ENCODE measurements at regions of chr2 and their contacts with region 1.

Region 1: DNA sequence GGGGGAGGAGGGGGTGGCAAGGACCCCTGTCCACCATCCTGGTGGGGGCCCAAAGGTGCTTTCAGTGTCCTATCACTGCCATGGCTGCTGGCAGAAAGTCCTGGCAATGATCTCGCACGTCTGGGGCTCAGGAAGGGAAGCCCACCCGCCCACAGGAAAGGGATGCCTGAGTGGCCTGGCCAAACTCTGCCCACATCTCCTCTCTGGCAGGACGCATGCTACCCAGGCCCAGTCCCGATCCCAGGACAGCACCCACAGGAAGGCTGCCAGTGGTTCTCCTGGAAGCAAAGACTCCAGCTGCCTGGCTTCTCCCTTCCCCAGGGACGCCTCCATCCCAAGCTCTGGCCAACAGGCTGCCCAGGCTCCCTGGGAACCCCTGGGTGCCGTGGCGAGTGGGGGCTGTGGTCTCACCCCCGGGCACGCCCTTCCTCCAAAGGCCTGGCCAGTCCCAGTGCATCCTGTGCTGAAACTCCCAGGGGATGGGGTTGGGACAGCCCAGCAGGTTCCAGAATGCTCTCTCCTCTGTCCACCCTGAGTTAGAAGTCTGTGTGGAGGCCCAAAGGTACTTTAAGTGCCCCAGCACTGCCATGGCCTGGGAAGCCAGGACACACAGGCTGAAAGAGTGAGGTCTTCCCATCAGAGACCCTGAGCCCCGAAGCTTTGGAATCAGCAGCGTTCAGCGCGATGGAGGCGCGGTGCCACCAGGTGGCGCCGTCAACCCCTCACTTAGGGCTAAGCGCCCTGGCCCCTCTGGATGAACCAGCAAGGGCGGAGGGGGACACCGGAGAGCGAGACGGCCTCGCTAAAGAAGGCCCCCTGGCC is 29.8 kb upstream of the TAF1B start:
- DNase-seq: peak; percentile 83
- ATAC-seq: peak; percentile 95
- H3K4me3 Mint-ChIP-seq: no peak overlapping the region
- H3K27ac Mint-ChIP-seq: peak overlapping the region; percentile 49
- H3K4me1 Mint-ChIP-seq: peaks cover 8% of the 10 kb centered on the region
- H3K27me3 Mint-ChIP-seq: peaks cover 4% of the 10 kb centered on the region
- CTCF ChIP-seq: peak; percentile 93

Region 2: GRCh38 chr2:8986327-8986976 is 827.1 kb before region 1 on chr2:
- CTCF ChIA-PET with region 1: no interaction called
- POLR2A ChIA-PET with region 1: no interaction called
- intact Hi-C with region 1: no loop called
- DNase-seq: peak; percentile 49
- ATAC-seq: peak; percentile 68
- H3K4me3 Mint-ChIP-seq: no peak overlapping the region
- H3K27ac Mint-ChIP-seq: no peak overlapping the region
- H3K4me1 Mint-ChIP-seq: no peaks in the 10 kb centered on the region
- H3K27me3 Mint-ChIP-seq: peaks cover 3% of the 10 kb centered on the region
- CTCF ChIP-seq: peak; percentile 24

Region 3: DNA sequence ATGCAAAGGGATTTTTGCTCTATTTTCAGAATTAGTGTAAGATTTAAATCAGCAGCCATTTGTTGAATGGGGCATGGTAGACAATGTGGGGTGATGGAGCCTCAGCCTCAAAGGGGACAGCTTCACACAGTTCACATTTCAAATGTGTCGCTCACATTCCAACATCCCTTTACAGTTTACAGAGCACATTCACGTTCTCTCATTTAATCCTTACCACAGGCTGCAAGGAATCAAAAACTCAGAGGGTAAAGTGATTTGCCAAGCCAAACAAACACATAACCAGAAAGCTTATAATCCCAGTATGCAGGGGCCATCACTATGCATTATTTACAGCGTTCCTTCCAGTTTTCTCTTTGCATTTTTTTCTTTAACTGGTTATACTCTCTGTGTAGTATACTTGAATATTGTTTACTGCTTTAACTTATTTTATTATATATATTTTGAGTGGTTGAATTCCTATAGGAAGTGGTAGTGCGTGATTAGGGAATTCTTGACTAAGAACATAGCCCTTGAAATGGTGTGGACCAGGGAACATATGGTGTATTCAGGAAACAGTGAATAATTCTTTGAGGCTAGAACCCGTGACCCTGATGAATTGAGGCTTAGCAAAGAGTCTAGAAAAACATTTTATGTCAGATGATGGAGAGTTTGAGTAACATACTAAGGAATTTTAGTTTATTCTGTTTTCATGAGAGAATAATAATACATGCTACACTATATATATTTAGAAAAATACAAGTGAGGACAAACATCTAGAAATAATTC is 11.6 kb after region 1 on chr2:
- CTCF ChIA-PET with region 1: interaction called, 28 read pairs
- POLR2A ChIA-PET with region 1: no interaction called
- intact Hi-C with region 1: loop called (anchors 1 kb)
- DNase-seq: no peak
- ATAC-seq: no peak
- H3K4me3 Mint-ChIP-seq: no peak overlapping the region
- H3K27ac Mint-ChIP-seq: no peak overlapping the region
- H3K4me1 Mint-ChIP-seq: no peaks in the 10 kb centered on the region
- H3K27me3 Mint-ChIP-seq: peaks cover 3% of the 10 kb centered on the region
- CTCF ChIP-seq: no peak

Region 4: GRCh38 chr2:9836524-9836923 is 23.0 kb after region 1 on chr2:
- CTCF ChIA-PET with region 1: interaction called, 46 read pairs
- POLR2A ChIA-PET with region 1: interaction called, 3 read pairs
- intact Hi-C with region 1: no loop called
- DNase-seq: no peak
- ATAC-seq: no peak
- H3K4me3 Mint-ChIP-seq: no peak overlapping the region
- H3K27ac Mint-ChIP-seq: no peak overlapping the region
- H3K4me1 Mint-ChIP-seq: no peaks in the 10 kb centered on the region
- H3K27me3 Mint-ChIP-seq: peaks cover 7% of the 10 kb centered on the region
- CTCF ChIP-seq: no peak

Region 5: DNA sequence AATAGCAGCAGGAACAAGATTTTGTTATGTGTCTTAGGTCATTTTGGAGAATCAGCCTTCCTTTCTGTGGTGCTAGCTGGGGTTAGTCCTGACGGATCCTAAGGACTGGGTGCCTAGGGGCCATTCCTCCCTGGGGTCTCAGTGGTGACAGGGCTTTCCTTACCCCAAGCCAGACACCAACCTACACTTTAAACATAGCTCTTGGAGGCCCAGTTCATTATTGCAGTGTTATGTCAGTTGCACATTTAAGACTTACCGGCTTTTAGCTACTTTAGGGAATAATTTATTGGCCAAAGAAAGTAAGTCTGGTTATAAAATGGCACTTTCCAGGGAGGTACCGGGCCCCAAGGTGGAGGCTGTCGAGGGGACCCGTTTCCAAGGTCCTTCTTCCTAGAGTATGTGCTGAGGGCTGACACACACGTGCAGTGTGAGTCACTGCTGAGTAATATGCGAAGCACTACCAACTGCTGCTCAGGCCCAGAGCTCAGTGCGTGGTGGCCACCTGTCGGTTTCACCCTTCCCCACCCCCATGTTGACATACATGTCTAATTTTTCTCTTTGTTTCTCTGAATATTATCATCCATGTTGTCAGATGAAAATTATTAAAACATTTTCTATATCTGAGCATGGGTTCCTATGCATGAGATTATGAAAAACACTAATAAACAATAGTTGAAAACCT is 101.0 kb after region 1 on chr2:
- CTCF ChIA-PET with region 1: interaction called, 18 read pairs
- POLR2A ChIA-PET with region 1: no interaction called
- intact Hi-C with region 1: no loop called
- DNase-seq: peak; percentile 77
- ATAC-seq: peak; percentile 100
- H3K4me3 Mint-ChIP-seq: no peak overlapping the region
- H3K27ac Mint-ChIP-seq: peak overlapping the region; percentile 51
- H3K4me1 Mint-ChIP-seq: peaks cover 10% of the 10 kb centered on the region
- H3K27me3 Mint-ChIP-seq: no peaks in the 10 kb centered on the region
- CTCF ChIP-seq: no peak

Region 6: DNA sequence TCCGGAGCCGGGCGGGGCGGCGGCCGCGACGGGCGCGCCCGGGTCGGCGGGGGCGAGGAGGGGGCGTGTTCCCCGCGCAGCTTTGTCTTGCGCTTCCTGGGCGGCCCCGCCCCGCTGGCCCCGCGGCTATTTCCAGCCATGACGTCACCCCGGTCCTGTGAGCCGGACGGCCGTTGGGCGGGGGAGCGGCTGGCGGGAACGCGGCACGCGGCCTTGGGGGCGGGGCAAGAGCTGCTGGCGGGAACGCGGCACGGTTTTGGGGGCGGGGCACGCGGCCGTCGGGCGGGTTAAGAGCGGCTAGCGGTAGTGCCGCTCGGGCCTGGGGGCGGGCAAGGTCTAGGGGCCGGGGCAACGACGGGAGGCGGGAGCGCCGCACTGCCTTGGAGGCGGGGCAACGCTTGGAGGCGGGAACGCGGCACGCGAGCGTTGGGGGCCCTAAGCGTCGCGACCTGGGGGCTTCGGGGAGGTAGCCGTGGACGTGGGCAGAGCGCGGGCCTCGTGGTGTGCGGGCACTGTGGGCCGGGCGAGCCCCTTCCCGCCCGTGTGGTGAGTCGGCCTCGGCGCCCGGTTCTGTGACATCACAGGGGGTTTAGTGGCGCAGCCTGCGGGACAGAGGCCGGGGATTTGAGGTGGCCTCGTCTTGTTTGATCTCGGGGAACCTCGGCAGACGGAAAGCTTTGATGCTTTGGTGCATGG is 230.5 kb after region 1 on chr2:
- CTCF ChIA-PET with region 1: interaction called, 82 read pairs
- POLR2A ChIA-PET with region 1: interaction called, 4 read pairs
- intact Hi-C with region 1: loop called (anchors 1 kb)
- DNase-seq: peak; percentile 95
- ATAC-seq: peak; percentile 82
- H3K4me3 Mint-ChIP-seq: peak overlapping the region; percentile 64
- H3K27ac Mint-ChIP-seq: peak overlapping the region; percentile 73
- H3K4me1 Mint-ChIP-seq: peaks cover 8% of the 10 kb centered on the region
- H3K27me3 Mint-ChIP-seq: peaks cover 2% of the 10 kb centered on the region
- CTCF ChIP-seq: no peak

Region 7: GRCh38 chr2:10162586-10163497 is 349.3 kb after region 1 on chr2:
- CTCF ChIA-PET with region 1: no interaction called
- POLR2A ChIA-PET with region 1: no interaction called
- intact Hi-C with region 1: no loop called
- DNase-seq: no peak
- ATAC-seq: peak; percentile 57
- H3K4me3 Mint-ChIP-seq: no peak overlapping the region
- H3K27ac Mint-ChIP-seq: no peak overlapping the region
- H3K4me1 Mint-ChIP-seq: no peaks in the 10 kb centered on the region
- H3K27me3 Mint-ChIP-seq: no peaks in the 10 kb centered on the region
- CTCF ChIP-seq: no peak